Psoas muscle (tissue), 8 donors: ENCODE measurements at regions of chr12 and their contacts with region 1.

Region 1: DNA sequence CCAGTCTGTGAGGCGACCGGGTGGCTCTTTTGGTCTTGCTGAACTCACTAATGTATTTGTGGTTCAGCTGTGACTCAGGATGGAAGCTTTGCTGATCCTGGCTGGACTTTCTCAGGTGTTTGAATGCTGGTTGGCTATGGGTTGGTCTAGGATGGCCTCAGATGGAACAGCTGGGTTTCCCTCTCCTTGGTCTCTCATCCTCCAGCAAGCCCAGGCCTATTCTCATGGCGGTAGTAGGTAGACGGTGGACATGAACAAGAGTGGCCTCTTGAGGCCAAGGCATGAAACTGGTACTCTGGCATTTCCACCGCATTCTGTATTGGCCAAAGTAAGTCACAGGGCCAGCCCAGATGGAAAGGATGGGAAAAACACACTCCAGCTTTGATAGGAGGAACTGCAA is 11.8 kb upstream of the POLR3B start:
- DNase-seq: no peak
- ATAC-seq: peak; percentile 70 to 77 (median 74)
- H3K4me3 ChIP-seq: no peak overlapping the region
- H3K27ac ChIP-seq: peak overlapping the region; percentile 30
- H3K4me1 ChIP-seq: peaks cover 30% of the 10 kb centered on the region
- H3K27me3 ChIP-seq: no peaks in the 10 kb centered on the region
- CTCF ChIP-seq: peak; percentile 51

Region 2: DNA sequence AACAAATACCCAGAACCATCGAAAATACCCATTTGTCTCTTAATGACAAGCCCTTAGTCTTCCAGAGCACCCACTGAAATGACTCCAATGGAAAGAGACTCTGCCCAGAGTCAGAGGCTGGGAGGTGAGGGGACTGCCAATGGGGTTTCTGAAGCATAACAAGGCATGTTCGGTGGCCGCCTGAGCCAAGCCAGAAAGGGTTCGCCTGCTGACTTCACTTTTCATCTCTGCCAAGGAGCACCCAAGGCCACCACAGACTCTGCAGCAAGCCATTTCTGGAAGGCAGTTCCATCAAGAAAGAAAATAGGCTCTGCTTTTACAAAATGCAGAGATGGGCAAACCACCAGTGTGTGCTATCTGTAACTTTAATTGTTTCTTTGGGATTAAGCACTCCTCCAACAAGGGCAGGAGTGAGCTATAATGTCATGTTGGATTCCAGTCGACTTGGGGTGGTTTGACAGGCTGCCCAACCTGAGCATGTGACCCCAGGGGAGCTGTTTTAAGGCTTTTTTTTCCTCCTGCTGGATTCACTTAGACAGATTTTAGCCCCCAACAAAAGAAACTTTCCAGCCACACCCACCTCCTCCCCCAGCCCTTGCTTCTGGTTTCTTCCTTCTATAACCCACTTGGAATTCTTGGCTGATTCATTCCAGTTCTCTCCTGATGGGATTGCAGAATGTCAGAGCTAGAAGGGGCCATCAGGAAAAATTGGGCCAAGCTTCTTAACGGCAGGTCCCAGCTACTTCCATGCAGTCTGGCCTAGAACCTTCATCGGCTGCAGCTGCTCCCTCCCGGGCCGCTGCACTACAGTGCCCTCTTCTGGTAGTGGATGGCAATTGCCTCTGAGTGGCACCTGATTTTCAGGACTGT is 122.0 kb before region 1 on chr12:
- intact Hi-C with region 1: loop called (anchors 1 to 5 kb)
- DNase-seq: peak; percentile 67 to 85
- ATAC-seq: peak; percentile 84 to 86 (median 84)
- H3K4me3 ChIP-seq: no peak overlapping the region
- H3K27ac ChIP-seq: no peak overlapping the region
- H3K4me1 ChIP-seq: peaks cover 8% of the 10 kb centered on the region
- H3K27me3 ChIP-seq: no peaks in the 10 kb centered on the region
- CTCF ChIP-seq: peak; percentile 96

Region 3: DNA sequence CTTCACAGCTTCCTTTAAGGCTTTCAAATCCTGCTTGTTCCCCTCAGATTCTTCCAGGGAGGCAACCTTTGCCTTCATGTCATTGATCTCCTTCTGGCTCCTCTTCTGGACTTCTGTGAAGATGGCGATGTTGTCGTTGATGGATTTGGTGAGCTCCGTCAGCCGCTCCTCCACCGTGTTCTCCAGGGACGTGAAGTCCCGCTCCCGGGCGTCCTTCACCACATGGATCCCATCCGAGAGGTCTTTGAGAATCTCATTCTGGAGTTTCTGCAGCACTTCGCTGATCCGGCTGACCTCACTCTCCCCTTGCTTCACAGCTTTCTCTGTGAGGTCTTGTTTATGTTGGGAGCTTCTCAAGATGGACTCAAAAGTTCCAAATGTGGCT is 105.8 kb before region 1 on chr12:
- intact Hi-C with region 1: loop called in 1 of 2 experiments (anchors 5 kb)
- DNase-seq: no peak
- ATAC-seq: no peak
- H3K4me3 ChIP-seq: no peak overlapping the region
- H3K27ac ChIP-seq: no peak overlapping the region
- H3K4me1 ChIP-seq: peaks cover 10% of the 10 kb centered on the region
- H3K27me3 ChIP-seq: no peaks in the 10 kb centered on the region
- CTCF ChIP-seq: no peak

Region 4: GRCh38 chr12:106309671-106310505 is 35.9 kb before region 1 on chr12:
- intact Hi-C with region 1: loop called in 1 of 2 experiments (anchors 5 kb)
- DNase-seq: peak; percentile 30 to 54
- ATAC-seq: peak; percentile 39 to 54 (median 42)
- H3K4me3 ChIP-seq: no peak overlapping the region
- H3K27ac ChIP-seq: peak overlapping the region; percentile 97
- H3K4me1 ChIP-seq: peaks cover 74% of the 10 kb centered on the region
- H3K27me3 ChIP-seq: no peaks in the 10 kb centered on the region
- CTCF ChIP-seq: no peak

Region 5: GRCh38 chr12:106386813-106387535 is 41.2 kb after region 1 on chr12:
- intact Hi-C with region 1: no loop called
- DNase-seq: no peak
- ATAC-seq: no peak
- H3K4me3 ChIP-seq: no peak overlapping the region
- H3K27ac ChIP-seq: no peak overlapping the region
- H3K4me1 ChIP-seq: no peaks in the 10 kb centered on the region
- H3K27me3 ChIP-seq: no peaks in the 10 kb centered on the region
- CTCF ChIP-seq: no peak